HCT116 (cell line): ENCODE measurements at regions of chr15 and their contacts with region 1.

Region 1: GRCh38 chr15:40582726-40583246 is 11.3 kb upstream of the KNL1 start:
- DNase-seq: peak; percentile 86
- ATAC-seq: peak; percentile 81
- H3K4me3 ChIP-seq: peak overlapping the region; percentile 46 to 55
- H3K27ac ChIP-seq: peak overlapping the region; percentile 45
- H3K4me1 ChIP-seq: peaks cover 10 to 23% of the 10 kb centered on the region in 2 experiments; a peak in 3 of 4 replicates
- H3K27me3 ChIP-seq: no peaks in the 10 kb centered on the region
- CTCF ChIP-seq: no peak
- POLR2A ChIP-seq: peak; percentile 62
- RAD21 ChIP-seq: no peak

Region 2: DNA sequence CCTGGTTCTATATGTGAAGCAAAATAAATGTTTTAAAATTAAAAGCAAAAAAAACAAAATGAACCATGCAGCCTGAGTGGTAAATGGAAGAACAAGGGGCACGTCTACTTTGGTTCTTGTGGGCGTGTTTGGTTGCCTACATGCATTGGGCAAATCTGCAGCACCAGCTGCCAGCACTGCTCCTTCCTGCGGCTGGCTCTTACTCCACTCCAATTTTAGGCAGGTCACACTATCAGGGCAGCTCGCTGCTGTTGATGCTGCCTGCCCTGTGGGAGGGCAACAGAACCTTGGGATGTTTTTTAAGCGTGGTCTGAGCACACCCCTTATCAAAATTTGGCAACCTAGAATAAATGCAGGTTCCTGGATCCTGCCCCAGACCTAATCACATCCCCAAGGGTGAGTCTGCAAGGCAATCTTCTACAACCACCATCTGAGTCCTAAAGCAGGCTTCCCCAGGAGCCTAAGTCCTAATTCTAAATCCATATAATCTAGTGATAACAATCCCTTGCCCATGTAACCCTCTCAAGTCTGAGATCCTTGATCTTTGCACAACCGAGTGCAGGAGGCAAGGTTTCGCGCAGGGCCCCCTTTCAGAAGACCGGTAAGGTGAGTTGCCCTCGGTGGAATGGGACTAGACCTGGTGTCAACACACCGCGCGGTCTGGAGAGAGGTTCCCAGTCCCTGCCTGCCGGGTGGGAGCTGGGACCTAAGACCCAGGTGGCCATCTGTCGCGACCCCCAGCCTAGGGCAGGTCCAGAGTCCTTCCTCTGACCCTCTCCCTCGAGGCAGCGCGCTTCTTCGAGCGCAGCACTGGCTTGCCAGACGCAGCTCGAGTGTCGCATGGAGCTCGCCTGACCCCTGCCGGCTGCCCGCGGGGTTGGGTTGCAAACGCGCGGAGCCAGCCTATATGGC is 161.3 kb before region 1 on chr15:
- CTCF ChIA-PET with region 1: no interaction called
- POLR2A ChIA-PET with region 1: no interaction called
- RAD21 ChIA-PET with region 1: no interaction called
- intact Hi-C with region 1: no loop called
- DNase-seq: peak; percentile 32
- ATAC-seq: peak; percentile 94
- H3K4me3 ChIP-seq: no peak overlapping the region
- H3K27ac ChIP-seq: peak overlapping the region; percentile 55; the same call in 1 of the 2 replicates
- H3K4me1 ChIP-seq: peaks cover 16 to 22% of the 10 kb centered on the region in 2 experiments
- H3K27me3 ChIP-seq: no peaks in the 10 kb centered on the region
- CTCF ChIP-seq: peak; percentile 81 to 88 (median 86); a peak in 5 of 6 replicates
- POLR2A ChIP-seq: no peak
- RAD21 ChIP-seq: peak; percentile 91

Region 3: GRCh38 chr15:40564591-40565332 is 18.0 kb before region 1 on chr15 and contains the start of gene CCDC32:
- CTCF ChIA-PET with region 1: interaction called, 4 read pairs
- POLR2A ChIA-PET with region 1: interaction called, 16 read pairs
- RAD21 ChIA-PET with region 1: no interaction called
- intact Hi-C with region 1: no loop called
- DNase-seq: peak; percentile 97
- ATAC-seq: peak; percentile 94
- H3K4me3 ChIP-seq: peak within 1 kb of the TSS; percentile 85 to 87
- H3K27ac ChIP-seq: peak within 1 kb of the TSS; percentile 76
- H3K4me1 ChIP-seq: peaks cover 4 to 35% of the 10 kb centered on the region in 2 experiments; a peak in 3 of 4 replicates
- H3K27me3 ChIP-seq: no peaks in the 10 kb centered on the region
- CTCF ChIP-seq: no peak
- POLR2A ChIP-seq: no peak
- RAD21 ChIP-seq: no peak
- total RNA-seq, gene CCDC32: 18.6 TPM